ENCODE measurements at regions of chr9 and their contacts with region 1.

Region 1: GRCh38 chr9:4984621-4985385 is at the start of gene JAK2:
- DNase-seq: peak; percentile 87
- ATAC-seq: peak; percentile 83
- H3K4me3 ChIP-seq: peak within 1 kb of the TSS; percentile 85
- H3K27ac ChIP-seq: peak within 1 kb of the TSS; percentile 93
- H3K4me1 ChIP-seq: peaks cover 46% of the 10 kb centered on the region
- H3K27me3 ChIP-seq: no peaks in the 10 kb centered on the region
- CTCF ChIP-seq: no peak; the same call in 1 of the 2 replicates
- total RNA-seq, gene JAK2: 9.9 and 11.2 TPM in 2 replicates

Region 2: GRCh38 chr9:4762108-4762885 is 222.5 kb before region 1 on chr9:
- CTCF ChIA-PET with region 1: interaction called, 4 read pairs
- POLR2A ChIA-PET with region 1: interaction called, 5 read pairs
- intact Hi-C with region 1: loop called (anchors 1 kb)
- DNase-seq: peak; percentile 85
- ATAC-seq: peak; percentile 70
- H3K4me3 ChIP-seq: peak overlapping the region; percentile 61
- H3K27ac ChIP-seq: peak overlapping the region; percentile 32; the same call in 1 of the 2 replicates
- H3K4me1 ChIP-seq: peaks cover 10% of the 10 kb centered on the region; the same call in 1 of the 2 replicates
- H3K27me3 ChIP-seq: no peaks in the 10 kb centered on the region
- CTCF ChIP-seq: peak; percentile 71

Region 3: DNA sequence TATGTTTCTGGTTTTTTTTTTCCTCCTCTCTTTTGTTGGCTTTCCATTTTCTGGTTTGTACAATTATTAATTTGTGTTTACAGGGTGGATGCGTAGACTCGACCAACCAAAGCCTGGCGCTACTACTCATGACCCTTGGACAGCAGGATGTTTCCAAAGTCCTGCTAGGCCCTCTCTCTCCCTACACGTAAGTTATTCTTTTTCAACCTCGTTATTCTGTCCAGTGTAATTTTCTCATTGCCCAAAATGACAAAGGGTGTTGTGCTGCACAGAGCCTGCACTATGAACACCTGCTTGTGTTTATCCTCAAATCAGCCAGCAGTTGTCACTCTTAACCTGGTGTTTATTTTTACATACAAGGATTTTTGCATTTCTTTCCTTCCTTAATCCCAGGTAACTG is 135.4 kb before region 1 on chr9:
- CTCF ChIA-PET with region 1: interaction called, 7 read pairs
- POLR2A ChIA-PET with region 1: interaction called, 4 read pairs
- intact Hi-C with region 1: loop called (anchors 1 kb)
- DNase-seq: peak; percentile 13
- ATAC-seq: 0 out of 2 replicates have a peak, but pooled peaks have one; percentile 38
- H3K4me3 ChIP-seq: no peak overlapping the region
- H3K27ac ChIP-seq: no peak overlapping the region
- H3K4me1 ChIP-seq: no peaks in the 10 kb centered on the region
- H3K27me3 ChIP-seq: no peaks in the 10 kb centered on the region
- CTCF ChIP-seq: peak; percentile 49

Region 4: GRCh38 chr9:4904322-4905134 is 80.3 kb before region 1 on chr9:
- CTCF ChIA-PET with region 1: no interaction called
- POLR2A ChIA-PET with region 1: no interaction called
- intact Hi-C with region 1: loop called (anchors 1 kb)
- DNase-seq: peak; percentile 89
- ATAC-seq: peak; percentile 75
- H3K4me3 ChIP-seq: no peak overlapping the region
- H3K27ac ChIP-seq: peak overlapping the region; percentile 96
- H3K4me1 ChIP-seq: peaks cover 36% of the 10 kb centered on the region
- H3K27me3 ChIP-seq: no peaks in the 10 kb centered on the region
- CTCF ChIP-seq: no peak

Region 5: DNA sequence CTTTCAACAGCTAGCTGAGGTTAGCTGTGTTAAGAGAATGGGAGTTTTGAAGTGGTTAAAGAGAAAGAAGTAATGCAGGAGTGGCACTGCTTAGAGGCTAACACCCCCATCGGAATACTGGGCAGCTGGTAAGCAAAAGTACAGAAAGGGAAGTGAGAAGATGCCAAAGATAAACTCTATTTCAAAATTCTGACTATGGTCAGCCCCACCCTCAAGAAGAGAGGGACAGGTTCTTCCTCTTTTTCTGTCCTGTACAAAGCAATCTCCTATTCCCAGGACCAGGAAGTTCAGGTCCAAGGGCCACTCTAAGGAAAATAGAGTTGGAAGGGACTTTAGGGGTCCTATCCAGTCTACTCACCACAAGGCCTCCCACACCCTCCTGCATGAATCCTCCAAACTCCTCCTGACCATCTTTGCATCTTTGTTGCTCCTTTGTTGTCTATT is 45.7 kb before region 1 on chr9:
- CTCF ChIA-PET with region 1: no interaction called
- POLR2A ChIA-PET with region 1: no interaction called
- intact Hi-C with region 1: loop called (anchors 1 kb)
- DNase-seq: no peak
- ATAC-seq: no peak
- H3K4me3 ChIP-seq: no peak overlapping the region
- H3K27ac ChIP-seq: no peak overlapping the region
- H3K4me1 ChIP-seq: peaks cover 8% of the 10 kb centered on the region; the same call in 1 of the 2 replicates
- H3K27me3 ChIP-seq: no peaks in the 10 kb centered on the region
- CTCF ChIP-seq: no peak